Activated naive CD4-positive, alpha-beta T cell treated with anti-CD3 and anti-CD28 coated beads, Interleukin-2, amount 10 ng/mL, durations not matched to agents 7 days and 5 days (primary cell): ENCODE measurements at regions of chr1 and their contacts with region 1.

Region 1: DNA sequence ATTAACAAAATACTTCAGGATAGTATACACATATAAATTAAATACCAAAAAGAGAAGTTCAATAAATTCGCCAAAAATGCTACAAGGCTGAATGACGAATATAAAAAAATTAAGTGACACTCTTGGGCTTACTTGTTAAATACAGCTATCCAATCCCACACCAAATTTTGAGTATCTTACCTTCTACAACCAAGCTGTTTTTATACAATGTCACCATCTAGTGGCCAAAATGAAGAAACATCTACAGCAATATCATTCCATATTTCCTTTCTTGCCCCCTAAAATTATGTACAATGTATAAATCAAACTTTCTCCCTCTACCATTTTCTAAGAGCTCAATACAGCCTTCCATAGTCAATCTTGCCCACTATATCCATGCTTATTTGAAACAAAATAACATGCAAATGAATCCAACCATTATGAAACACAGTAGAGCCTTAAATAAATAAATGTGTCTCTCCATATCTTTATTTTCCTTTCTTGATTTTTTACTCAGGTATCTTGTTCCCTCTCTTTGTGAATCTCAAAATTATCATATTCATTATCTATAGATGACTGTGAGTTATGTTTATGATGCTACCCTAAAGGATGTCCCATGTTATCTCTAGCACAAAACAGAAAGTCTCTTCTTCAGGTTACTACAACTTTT is 86.3 kb downstream of the ACBD6 start:
- DNase-seq: no peak
- H3K4me3 Mint-ChIP-seq: no peak overlapping the region
- H3K27ac Mint-ChIP-seq: no peak overlapping the region
- H3K4me1 Mint-ChIP-seq: no peaks in the 10 kb centered on the region
- H3K27me3 Mint-ChIP-seq: no peaks in the 10 kb centered on the region

Region 2: GRCh38 chr1:180252638-180253536 is 163.2 kb before region 1 on chr1:
- CTCF ChIA-PET with region 1: interaction called, 31 read pairs
- DNase-seq: peak; percentile 84
- H3K4me3 Mint-ChIP-seq: no peak overlapping the region
- H3K27ac Mint-ChIP-seq: no peak overlapping the region
- H3K4me1 Mint-ChIP-seq: peaks cover 5% of the 10 kb centered on the region
- H3K27me3 Mint-ChIP-seq: peaks cover 55% of the 10 kb centered on the region

Region 3: GRCh38 chr1:180309338-180309737 is 106.8 kb before region 1 on chr1:
- CTCF ChIA-PET with region 1: no interaction called
- DNase-seq: no peak
- H3K4me3 Mint-ChIP-seq: no peak overlapping the region
- H3K27ac Mint-ChIP-seq: no peak overlapping the region
- H3K4me1 Mint-ChIP-seq: no peaks in the 10 kb centered on the region
- H3K27me3 Mint-ChIP-seq: no peaks in the 10 kb centered on the region